Ovary (tissue), 10 donors: ENCODE measurements at regions of chr1 and their contacts with region 1.

Region 1: DNA sequence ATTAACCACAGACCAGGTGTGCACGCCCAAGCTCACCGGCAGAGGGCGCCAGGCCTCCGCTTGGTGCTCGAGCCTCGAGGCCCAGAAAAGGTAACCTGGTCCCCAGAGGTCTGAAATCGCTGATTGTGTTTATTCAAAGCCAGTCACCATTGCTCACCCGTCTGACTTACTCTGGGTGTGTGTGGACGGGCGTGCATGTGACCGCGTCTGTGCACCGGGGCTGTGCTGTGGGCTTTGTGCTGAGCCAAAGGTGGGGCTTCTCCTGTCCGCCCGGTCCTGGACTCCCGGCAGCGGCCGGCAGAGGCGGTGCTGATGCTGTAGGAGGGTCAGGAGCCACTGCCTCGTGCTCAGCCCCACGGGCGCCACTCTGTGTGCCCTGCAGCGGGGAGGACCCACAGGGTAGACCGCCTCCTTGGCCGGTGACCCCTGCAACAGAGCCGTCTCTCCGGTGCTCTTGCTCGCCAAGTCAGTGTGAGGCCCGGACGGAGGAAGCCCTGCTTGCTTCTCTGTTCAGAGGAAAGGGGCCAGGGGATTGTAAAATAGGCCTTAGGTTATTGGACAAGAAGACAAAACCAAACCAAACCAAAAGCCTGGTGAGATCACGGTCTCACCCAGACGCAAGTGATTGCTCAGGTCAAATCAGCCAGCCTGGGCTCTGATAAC is 32.0 kb upstream of the BTG2 start:
- DNase-seq: peak; percentile 85 to 92 (median 91)
- H3K4me3 ChIP-seq: peak overlapping the region; percentile 9
- H3K27ac ChIP-seq: peak overlapping the region; percentile 62 to 81
- H3K4me1 ChIP-seq: peaks cover 7% of the 10 kb centered on the region
- H3K27me3 ChIP-seq: no peaks in the 10 kb centered on the region
- CTCF ChIP-seq: peak; percentile 91 to 100 (median 99)
- EP300 ChIP-seq: no peak
- POLR2A ChIP-seq: peak; percentile 34

Region 2: DNA sequence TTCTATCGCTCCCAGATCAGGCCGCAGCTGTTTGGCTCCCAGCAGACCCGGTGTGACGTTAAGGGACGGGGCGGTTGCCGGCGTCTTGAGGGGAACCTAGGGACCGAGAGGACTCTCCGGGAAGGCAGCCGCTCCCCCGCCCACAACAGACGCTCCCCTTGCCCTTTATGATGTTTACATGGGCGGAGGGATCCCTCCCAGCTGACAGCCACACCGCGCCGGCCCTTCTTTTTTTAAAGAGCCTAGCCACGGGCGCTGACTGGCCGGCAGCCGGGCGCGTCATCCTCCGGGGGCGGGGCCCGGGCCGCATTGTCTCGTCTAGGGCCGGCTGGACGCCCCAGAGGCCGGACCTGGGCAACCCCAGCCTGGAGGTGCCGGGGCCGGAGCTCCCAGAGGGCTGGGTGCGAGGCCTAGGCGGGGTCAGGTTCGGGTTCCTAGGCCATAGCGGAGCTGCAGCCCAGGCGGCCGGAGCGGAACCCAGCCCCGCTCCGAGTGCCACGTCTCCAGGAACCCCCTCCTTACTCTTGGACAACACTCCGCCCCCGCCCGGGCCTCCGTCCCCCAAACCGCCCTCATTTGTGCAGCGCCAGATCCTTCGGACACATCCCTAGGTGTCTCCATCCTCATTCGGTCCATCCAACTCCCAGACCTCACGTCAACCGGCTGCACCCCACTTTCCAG is 462.6 kb before region 1 on chr1 and contains the start of gene PCAT6:
- intact Hi-C with region 1: no loop called
- DNase-seq: peak; percentile 92 to 96 (median 94)
- H3K4me3 ChIP-seq: peak within 1 kb of the TSS; percentile 77
- H3K27ac ChIP-seq: peak within 1 kb of the TSS in 1 of 2 donors; percentile 39
- H3K4me1 ChIP-seq: peaks cover 5% of the 10 kb centered on the region
- H3K27me3 ChIP-seq: no peaks in the 10 kb centered on the region
- CTCF ChIP-seq: no peak
- EP300 ChIP-seq: no peak
- POLR2A ChIP-seq: peak; percentile 68
- total RNA-seq, gene PCAT6: 0.57 to 1.2 (median 1.0) TPM in 5 of 7 donors, not detected in the others

Region 3: DNA sequence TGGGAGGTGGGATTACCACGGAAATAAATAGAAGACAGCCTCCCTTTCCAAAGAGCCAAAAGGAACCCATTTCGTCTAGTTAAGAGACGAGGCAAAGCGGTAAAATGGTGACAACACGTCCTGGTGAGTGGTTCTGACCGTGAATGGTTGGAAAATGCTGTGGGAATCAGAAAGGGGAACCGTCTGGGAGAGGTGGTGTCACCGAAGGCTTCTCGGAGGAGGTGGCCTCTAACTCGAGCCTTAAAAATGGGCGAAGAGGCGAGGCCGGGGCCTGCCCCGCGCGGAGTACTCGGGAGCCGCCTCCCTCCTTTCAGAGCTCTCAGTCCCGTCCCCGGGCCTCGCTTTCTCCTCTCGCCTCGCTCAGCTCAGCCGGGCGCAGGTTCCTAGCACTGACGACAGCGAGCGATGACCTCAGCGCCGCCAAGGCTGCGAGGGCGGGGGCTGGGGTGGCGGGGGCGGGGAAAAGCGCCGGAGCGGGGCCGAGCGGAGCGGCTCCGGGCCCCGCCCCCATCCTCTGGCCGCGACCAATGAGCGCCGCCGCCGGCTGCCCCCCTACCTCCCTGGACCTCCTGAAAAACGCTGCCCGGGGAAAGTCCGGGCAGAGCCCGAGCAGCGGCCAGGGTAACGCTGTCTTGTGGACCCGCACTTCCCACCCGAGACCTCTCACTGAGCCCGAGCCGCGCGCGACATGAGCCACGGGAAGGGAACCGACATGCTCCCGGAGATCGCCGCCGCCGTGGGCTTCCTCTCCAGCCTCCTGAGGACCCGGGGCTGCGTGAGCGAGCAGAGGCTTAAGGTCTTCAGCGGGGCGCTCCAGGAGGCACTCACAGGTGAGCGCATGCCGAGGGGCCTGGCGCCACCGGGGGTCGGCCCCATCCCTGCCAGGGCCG is 31.8 kb after region 1 on chr1 and contains the start of gene BTG2:
- intact Hi-C with region 1: loop called in 2 of 4 experiments (anchors 5 kb)
- DNase-seq: peak; percentile 94 to 96 (median 96)
- H3K4me3 ChIP-seq: peak within 1 kb of the TSS; percentile 79
- H3K27ac ChIP-seq: peak within 1 kb of the TSS; percentile 99
- H3K4me1 ChIP-seq: peaks cover 9% of the 10 kb centered on the region
- H3K27me3 ChIP-seq: no peaks in the 10 kb centered on the region
- CTCF ChIP-seq: peak in 1 of 3 donors; percentile 6
- EP300 ChIP-seq: peak; percentile 56
- POLR2A ChIP-seq: peak; percentile 100
- total RNA-seq, gene BTG2: 124 to 395 (median 220) TPM

Region 4: DNA sequence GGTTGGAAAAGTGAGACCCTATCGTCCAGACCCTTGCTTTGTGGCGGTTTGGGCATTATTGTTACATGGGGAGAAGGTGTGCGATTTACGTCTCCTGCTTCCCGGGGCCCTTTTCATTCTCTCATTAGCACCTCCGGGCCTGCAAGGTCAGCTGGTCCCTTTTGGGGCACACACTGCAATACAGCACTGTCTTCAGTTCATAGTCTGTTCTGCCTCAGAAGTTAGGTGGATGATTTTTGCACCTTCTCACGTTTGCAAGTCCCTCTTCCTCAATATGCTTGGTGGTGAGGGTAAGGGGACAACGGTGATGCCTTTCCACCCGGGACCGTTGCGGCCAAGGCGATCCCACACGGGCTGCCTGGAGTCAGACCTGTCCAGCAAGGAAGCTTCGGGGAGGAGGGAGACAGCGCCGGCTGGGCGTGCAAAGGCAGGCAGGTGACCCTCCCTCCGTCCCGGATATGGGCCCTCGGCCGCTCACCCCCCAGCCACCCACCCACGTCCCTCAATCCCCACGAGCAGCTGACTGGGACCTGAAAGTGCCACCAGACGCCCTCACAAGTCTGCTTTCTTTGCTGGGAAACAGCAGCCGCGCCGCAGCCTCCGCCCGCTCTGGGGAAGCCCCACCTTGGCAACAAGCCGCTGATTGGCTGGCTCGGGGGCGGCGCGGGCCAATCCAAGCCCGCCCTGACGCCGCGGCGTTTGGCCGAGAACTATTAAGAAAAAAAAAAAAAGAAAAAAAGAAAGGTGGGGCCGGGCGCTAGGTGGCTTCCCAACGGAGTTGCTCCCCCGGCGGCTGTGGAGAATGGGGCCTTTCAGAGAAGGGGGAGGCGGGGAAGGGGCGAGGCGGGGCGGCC is 53.7 kb after region 1 on chr1:
- intact Hi-C with region 1: loop called in 2 of 4 experiments (anchors 2 to 5 kb)
- DNase-seq: peak; percentile 95 to 97 (median 95)
- H3K4me3 ChIP-seq: peak overlapping the region; percentile 44
- H3K27ac ChIP-seq: peak overlapping the region; percentile 74 to 91
- H3K4me1 ChIP-seq: peaks cover 22% of the 10 kb centered on the region
- H3K27me3 ChIP-seq: no peaks in the 10 kb centered on the region
- CTCF ChIP-seq: no peak
- EP300 ChIP-seq: no peak
- POLR2A ChIP-seq: peak; percentile 82

Region 5: DNA sequence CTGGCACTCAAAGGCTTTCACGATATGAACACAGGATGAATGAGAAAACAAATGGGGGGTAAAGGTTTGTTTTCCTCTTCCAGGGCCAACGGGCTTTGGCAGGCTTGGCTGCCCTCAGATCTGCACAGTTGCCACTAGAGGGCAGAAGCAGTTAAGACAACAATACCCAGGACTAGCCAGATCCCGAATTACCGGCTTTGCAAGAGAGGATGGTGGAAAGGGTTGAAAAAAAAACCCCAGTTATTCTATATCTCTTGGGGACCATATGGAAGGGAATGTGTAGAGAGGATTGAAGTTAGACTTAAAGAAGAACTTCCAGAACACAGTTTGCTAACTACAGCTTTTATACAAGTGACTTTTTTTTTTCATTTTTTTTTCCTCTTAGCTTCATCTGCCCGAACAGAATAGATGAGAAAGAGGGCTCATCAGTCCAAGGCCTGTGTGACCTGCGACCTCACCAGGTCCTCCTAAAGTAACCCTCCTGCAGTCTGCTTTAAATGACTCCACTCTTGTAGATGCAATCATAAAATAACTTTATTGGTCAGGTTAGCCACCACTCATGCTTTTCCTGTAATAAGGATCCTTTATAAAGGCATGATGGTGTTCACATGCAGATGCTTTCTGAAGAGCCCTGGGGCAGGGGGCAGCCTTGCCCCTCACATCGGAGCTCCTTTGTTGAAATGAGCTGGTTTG is 66.9 kb after region 1 on chr1:
- intact Hi-C with region 1: loop called in 3 of 4 experiments (anchors 1 to 5 kb)
- DNase-seq: peak; percentile 75 to 83 (median 79)
- H3K4me3 ChIP-seq: no peak overlapping the region
- H3K27ac ChIP-seq: peak overlapping the region; percentile 67 to 74
- H3K4me1 ChIP-seq: peaks cover 7% of the 10 kb centered on the region
- H3K27me3 ChIP-seq: no peaks in the 10 kb centered on the region
- CTCF ChIP-seq: peak; percentile 83 to 92 (median 90)
- EP300 ChIP-seq: no peak
- POLR2A ChIP-seq: no peak

Region 6: DNA sequence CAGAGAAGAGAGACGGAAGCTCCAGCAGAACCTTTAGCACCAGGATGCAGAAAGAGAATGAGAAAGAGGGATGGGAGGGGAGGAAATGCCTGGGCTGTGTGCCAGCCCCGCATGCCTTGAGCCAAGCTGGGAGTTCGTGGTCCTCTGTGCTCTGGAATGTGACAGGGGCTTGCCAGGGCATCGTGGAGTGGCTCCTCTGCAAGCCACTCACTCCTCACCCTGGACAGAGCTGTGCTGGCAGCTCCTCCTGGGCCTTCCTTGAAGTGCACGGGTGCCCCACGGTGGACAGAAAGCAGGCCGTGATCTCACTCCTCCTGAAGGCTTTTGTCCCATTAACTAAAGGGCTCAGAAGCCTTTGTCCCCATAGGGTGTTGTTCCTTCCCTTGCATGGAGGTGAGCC is 167.4 kb after region 1 on chr1:
- intact Hi-C with region 1: loop called in 1 of 4 experiments (anchors 10 kb)
- DNase-seq: peak; percentile 77 to 86 (median 85)
- H3K4me3 ChIP-seq: no peak overlapping the region
- H3K27ac ChIP-seq: peak overlapping the region; percentile 72 to 81
- H3K4me1 ChIP-seq: peaks cover 12% of the 10 kb centered on the region
- H3K27me3 ChIP-seq: no peaks in the 10 kb centered on the region
- CTCF ChIP-seq: peak; percentile 52 to 77 (median 74)
- EP300 ChIP-seq: no peak
- POLR2A ChIP-seq: no peak

Region 7: DNA sequence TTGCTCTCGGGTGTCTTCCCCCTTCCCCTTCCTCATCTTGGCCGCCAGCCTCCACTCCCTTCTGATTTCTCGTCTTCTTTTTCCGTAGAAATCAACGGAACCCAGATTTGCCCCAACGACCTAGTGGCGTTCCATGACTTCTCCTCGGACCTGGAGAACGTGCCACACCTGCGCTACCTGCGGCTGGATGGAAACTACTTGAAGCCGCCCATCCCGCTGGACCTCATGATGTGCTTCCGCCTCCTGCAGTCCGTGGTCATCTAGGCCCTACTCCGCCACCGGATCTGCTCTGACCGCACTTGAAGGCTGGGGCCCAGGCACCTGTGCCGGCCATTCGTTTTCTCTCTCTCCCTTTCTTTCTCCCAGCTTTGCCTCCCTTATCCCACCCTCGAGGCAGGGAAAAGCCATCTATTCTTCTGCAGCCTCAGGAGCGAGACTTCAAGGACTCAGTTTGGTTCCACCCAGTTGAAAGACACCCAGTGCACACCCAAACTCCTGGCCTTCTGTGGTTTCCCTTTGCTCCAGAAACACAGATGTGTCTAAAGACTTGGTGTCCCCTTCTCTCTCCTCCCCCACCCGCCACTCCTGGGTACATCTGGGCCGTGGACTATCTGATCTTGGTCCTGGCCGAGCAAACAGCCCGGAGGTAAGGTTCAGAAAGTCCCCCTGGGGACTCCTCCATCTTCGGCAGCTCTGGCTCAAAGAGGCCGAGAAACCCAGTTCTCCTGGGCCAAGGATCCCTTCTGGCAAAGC is 213.5 kb after region 1 on chr1:
- intact Hi-C with region 1: loop called (anchors 2 to 5 kb)
- DNase-seq: peak in 4 of 5 donors; percentile 62 to 67 (median 64)
- H3K4me3 ChIP-seq: peak overlapping the region; percentile 9
- H3K27ac ChIP-seq: peak overlapping the region; percentile 87 to 94
- H3K4me1 ChIP-seq: peaks cover 11% of the 10 kb centered on the region
- H3K27me3 ChIP-seq: no peaks in the 10 kb centered on the region
- CTCF ChIP-seq: no peak
- EP300 ChIP-seq: no peak
- POLR2A ChIP-seq: no peak

Region 8: DNA sequence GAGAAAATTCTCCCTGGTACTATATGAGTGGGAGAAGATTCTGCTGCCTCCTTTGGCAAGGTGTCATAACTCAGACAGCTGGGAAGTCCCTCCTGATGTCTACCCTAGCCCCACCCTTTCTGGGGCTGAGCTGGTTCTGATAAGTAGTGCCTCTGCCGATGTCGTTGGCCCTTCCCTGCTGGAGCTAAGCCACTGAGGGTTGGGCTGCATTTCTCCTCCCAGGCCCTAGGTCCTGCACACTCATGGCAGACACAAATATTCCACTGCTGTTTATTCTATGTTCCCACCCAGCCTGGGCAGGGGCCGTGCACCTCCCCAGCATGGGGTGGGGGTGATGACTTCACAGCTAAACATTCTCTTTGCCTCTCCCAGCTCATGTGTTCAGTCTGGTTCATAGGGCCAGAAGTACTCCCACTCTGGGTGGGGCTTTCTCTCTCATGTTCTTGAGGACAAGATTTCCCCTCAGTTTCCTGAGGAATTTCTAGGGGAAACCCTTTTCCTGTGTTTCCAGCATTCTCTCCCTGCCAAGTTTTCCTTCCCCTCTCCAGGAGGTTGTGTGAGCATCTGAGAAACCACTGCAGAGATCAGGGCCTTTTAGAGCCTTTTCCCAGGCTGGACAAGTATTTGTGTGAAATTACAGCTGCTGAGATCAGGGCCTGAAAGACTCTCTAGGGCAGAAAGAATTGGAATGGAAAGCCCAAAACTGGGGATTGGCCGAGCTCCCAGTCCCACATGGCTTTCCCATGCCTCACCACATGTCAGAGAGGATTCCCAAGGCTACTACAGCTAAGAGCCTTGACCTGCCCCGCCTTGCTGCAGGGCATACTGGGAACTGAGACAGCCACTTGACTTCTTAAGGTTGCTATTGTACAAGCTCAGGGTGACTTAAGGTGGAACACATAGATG is 419.5 kb after region 1 on chr1:
- intact Hi-C with region 1: loop called in 2 of 4 experiments (anchors 10 kb)
- DNase-seq: peak; percentile 91 to 95 (median 92)
- H3K4me3 ChIP-seq: no peak overlapping the region
- H3K27ac ChIP-seq: peak overlapping the region; percentile 63 to 78
- H3K4me1 ChIP-seq: peaks cover 40% of the 10 kb centered on the region
- H3K27me3 ChIP-seq: no peaks in the 10 kb centered on the region
- CTCF ChIP-seq: peak in 2 of 3 donors; percentile 18 to 37
- EP300 ChIP-seq: no peak
- POLR2A ChIP-seq: no peak